Gastrocnemius medialis (tissue), 4 donors: ENCODE measurements at regions of chr10 and their contacts with region 1.

Region 1: GRCh38 chr10:24262931-24263590 is 54.1 kb downstream of the KIAA1217 start:
- DNase-seq: peak; percentile 96
- ATAC-seq: peak; percentile 88 to 89
- H3K4me3 ChIP-seq: peak overlapping the region; percentile 2 to 33 (median 24)
- H3K27ac ChIP-seq: peak overlapping the region; percentile 94 to 98 (median 96)
- H3K4me1 ChIP-seq: peaks cover 72 to 83% of the 10 kb centered on the region in 2 donors
- H3K27me3 ChIP-seq: no peaks in the 10 kb centered on the region
- CTCF ChIP-seq: no peak
- POLR2A ChIP-seq: peak in 1 of 2 donors; percentile 15

Region 2: DNA sequence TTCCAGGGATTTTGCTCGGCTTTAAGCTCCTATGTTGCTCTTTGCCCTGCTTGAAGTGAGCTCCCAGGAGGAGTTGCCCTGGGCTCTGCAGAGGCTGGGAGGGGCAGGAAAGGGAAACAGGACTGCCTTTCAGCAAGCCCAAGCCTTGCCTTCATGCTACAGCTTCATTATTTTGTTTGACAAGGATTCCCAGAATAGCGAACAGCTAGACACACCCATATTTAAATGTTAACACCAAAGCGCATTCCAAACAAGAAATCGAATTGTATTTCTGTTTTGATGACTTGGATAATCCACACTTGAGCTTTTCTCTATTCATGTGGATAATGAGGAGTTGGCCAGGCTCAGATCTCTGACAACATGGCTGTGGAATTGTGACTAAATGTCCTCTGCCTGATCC is 47.9 kb before region 1 on chr10:
- in situ Hi-C with region 1: no loop called
- intact Hi-C with region 1: loop called (anchors 2 kb)
- DNase-seq: no peak
- ATAC-seq: peak; percentile 5 to 10
- H3K4me3 ChIP-seq: peak overlapping the region; percentile 6 to 39 (median 26)
- H3K27ac ChIP-seq: peak overlapping the region; percentile 92 to 96 (median 94)
- H3K4me1 ChIP-seq: peaks cover 68 to 71% of the 10 kb centered on the region in 2 donors
- H3K27me3 ChIP-seq: no peaks in the 10 kb centered on the region
- CTCF ChIP-seq: no peak
- POLR2A ChIP-seq: peak in 1 of 2 donors; percentile 21

Region 3: GRCh38 chr10:24238519-24239252 is 24.4 kb before region 1 on chr10:
- in situ Hi-C with region 1: no loop called
- intact Hi-C with region 1: loop called (anchors 1 kb)
- DNase-seq: no peak
- ATAC-seq: no peak
- H3K4me3 ChIP-seq: no peak overlapping the region
- H3K27ac ChIP-seq: peak overlapping the region; percentile 58 to 78 (median 72)
- H3K4me1 ChIP-seq: peaks cover 78 to 80% of the 10 kb centered on the region in 2 donors
- H3K27me3 ChIP-seq: no peaks in the 10 kb centered on the region
- CTCF ChIP-seq: no peak
- POLR2A ChIP-seq: no peak

Region 4: DNA sequence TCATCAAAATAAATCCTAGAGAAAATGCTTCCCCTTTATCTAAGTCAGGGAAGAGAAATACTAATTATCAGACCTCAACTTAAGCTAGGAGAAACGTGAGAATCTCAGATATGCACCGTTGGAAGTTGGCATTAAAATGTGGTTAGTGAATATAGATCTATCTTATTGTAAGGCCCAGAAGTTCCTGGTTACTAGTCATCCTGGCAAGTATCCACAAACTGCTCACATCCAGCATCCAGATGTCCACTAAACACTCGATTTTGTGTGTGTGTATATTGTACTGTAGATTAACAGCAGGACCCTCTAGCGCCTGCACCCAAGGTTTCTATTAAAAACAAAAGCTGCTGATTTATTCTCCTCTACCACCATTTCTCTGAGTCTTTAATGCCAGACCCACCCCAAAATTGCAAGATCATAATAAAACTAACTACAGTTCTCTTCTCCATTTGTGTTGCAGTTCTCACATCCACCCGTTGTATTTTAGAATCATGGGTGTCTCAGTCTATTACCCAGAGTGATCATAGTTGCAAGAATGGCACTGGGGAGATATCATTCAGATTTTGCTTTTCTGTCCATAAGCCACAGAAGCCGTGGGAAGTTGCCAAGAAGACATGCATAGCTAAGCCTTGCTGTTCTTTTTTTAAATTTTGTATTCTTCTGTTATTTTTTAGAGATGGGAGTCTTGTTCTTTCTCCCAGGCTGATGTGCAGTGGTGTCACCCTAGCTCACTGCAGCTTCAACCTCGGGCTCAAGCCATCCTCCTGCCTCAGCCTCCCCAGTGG is 111.3 kb after region 1 on chr10:
- in situ Hi-C with region 1: no loop called
- intact Hi-C with region 1: no loop called
- DNase-seq: no peak
- ATAC-seq: no peak
- H3K4me3 ChIP-seq: no peak overlapping the region
- H3K27ac ChIP-seq: peak overlapping the region in 2 of 4 donors; percentile 12 to 97
- H3K4me1 ChIP-seq: peaks cover 41% of the 10 kb centered on the region in 2 donors
- H3K27me3 ChIP-seq: no peaks in the 10 kb centered on the region
- CTCF ChIP-seq: no peak
- POLR2A ChIP-seq: no peak

Region 5: GRCh38 chr10:24406809-24407483 is 143.9 kb after region 1 on chr10:
- in situ Hi-C with region 1: no loop called
- intact Hi-C with region 1: loop called (anchors 1 kb)
- DNase-seq: peak; percentile 55 to 74
- ATAC-seq: peak; percentile 89 to 91
- H3K4me3 ChIP-seq: no peak overlapping the region
- H3K27ac ChIP-seq: peak overlapping the region; percentile 84 to 97 (median 92)
- H3K4me1 ChIP-seq: peaks cover 66 to 76% of the 10 kb centered on the region in 2 donors
- H3K27me3 ChIP-seq: no peaks in the 10 kb centered on the region
- CTCF ChIP-seq: no peak
- POLR2A ChIP-seq: peak; percentile 81 to 82